ENCODE measurements at regions of chr11 and their contacts with region 1.

Region 1: GRCh38 chr11:19553683-19554333 is 158.8 kb upstream of the NAV2 start:
- DNase-seq: peak; percentile 82 to 97 (median 93)

Region 2: GRCh38 chr11:19071255-19071654 is 482.6 kb before region 1 on chr11:
- intact Hi-C with region 1: loop called (anchors 5 kb)
- DNase-seq: peak; percentile 43 to 82 (median 67)

Region 3: DNA sequence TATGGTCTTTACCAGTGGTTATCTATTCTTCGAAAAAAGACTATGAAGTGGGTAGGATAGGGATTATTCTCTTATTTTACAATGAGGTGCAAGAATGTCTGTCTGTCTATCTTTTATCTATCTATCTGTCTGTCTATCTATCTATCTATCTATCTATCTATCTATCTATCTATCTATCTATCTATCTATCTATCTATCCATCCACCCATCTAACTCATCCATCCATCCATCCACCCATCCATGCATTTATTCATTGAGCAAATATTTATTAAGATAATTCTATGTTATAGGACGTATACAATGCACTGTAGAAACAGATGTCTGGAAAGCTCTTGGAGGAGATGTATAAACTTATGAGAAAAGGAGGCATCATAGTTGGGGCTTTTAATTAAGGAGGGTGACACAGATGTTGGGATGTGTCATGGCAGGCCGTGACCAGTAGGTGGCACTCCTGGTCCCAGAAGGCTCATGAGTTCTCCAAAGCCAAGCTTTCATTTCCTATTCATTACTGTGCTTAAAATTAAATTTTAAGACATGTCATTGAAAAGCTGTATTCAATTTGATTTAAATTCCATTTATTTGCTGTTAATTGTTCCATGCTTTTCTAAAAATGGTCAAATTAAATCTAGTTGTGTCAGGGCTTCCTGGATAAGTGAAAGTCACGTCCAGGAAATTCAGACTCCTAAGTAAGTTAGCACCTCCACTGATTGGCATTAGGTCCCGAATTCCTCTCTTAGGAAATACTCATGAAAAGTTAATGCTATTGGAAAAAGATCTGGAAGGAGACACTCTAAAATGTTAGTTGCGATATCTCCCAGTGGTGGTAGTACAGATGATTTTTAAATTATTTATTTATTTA is 294.1 kb before region 1 on chr11:
- intact Hi-C with region 1: loop called (anchors 10 kb)
- DNase-seq: peak; percentile 26 to 92 (median 82)

Region 4: GRCh38 chr11:19311308-19312030 is 242.3 kb before region 1 on chr11:
- intact Hi-C with region 1: loop called (anchors 2 kb)
- DNase-seq: peak; percentile 34 to 94 (median 83)

Region 5: GRCh38 chr11:19597224-19597623 is 43.4 kb after region 1 on chr11:
- intact Hi-C with region 1: no loop called
- DNase-seq: peak in 1 of 42 donors; percentile 37

Region 6: DNA sequence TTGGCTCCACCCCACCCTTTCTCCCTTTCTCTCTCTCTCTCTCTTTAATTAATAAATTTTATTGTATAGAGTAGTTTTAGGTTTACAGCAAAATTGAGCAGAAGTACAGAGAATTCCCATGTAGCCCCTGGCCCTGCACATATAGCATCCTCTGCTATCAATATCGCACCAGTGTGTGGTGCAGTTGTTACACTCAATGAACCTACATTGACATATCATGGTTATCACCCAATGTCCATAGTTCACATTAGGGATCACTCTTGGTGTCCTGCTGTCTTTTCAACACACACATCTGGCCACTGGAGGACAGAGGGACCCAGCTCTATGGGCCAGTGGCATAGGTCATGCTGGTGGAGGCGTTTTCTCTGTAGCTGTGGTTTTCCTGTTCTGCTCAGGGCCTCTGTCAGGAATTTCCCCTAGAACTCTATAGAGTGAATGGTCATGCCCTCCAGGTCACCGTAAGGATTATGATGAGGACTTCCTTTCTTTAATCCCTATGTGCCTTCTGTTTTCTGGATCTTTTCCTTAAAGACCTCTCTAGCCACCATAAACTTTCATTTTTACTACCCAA is 60.6 kb after region 1 on chr11:
- intact Hi-C with region 1: no loop called
- DNase-seq: peak in 5 of 42 donors; percentile 28 to 57 (median 39)

Region 7: DNA sequence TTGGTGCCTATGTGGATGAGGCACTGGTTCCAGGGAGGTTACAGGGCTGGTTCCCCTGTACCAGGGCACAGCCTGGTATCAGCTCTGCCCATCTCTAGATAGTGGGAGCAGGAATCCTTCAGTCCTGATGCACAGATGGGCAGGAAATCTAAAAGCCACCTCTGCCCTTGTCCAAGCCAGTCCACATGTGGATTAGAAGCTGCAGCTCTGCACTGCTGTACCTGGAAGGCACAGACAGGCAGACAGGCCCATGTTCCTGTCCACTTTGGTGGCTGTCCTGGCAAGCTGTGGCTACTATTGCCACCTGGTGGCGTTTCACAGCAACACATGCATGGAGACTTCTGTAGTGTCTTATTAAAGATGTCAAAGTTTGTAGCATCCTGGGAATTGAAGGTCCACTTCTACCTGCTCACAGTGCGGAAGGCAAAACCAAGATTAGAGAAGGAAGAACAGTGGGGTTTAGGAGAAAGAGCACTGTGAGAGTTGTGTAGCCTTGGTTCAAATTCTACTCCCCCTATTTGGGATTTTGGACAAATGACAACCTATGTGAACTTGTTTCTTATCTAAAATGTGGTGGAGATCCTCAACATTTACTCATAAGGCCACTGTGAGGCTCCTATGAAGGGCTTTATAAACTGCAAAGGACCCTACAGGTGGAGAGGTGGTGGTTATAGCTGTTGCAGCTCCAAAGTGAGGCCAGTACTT is 188.9 kb after region 1 on chr11:
- intact Hi-C with region 1: loop called (anchors 2 kb)
- DNase-seq: peak; percentile 45 to 92 (median 86)

Measured in head of caudate nucleus (tissue), 42 donors.